Natural killer cell (primary cell): ENCODE measurements at regions of chr10 and their contacts with region 1.

Region 1: DNA sequence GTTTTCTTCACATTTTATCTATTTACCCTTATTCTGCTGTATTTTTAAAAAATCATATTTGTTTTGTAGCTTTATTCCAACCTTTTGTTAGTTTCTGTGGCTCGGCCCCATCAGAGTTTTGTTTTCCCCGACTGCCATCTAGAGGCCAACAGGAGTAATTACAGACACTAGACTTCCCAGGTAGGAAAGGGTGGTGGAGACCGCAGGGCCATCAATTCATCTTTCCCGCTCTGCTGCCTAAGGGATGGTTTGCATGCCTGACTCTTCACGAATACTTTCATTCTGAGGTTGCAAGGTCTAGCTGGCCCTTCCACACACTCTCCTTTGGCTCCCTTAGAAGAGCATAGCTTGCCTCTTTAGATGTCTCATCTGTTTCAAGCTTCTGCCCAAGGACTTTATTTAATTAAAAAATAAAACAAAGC is 38.3 kb downstream of the LYZL2 start:
- DNase-seq: peak; percentile 22 to 84
- ATAC-seq: peak; percentile 73 to 91 (median 87)
- H3K4me3 ChIP-seq: no peak overlapping the region
- H3K4me3 Mint-ChIP-seq: no peak overlapping the region
- H3K27ac ChIP-seq: no peak overlapping the region
- H3K27ac Mint-ChIP-seq: no peak overlapping the region
- H3K4me1 ChIP-seq: peaks cover 9% of the 10 kb centered on the region
- H3K4me1 Mint-ChIP-seq: peaks cover 4 to 6% of the 10 kb centered on the region in 2 donors
- H3K27me3 ChIP-seq: no peaks in the 10 kb centered on the region
- H3K27me3 Mint-ChIP-seq: peaks cover 12 to 20% of the 10 kb centered on the region in 2 donors
- CTCF ChIP-seq: peak; percentile 85

Region 2: DNA sequence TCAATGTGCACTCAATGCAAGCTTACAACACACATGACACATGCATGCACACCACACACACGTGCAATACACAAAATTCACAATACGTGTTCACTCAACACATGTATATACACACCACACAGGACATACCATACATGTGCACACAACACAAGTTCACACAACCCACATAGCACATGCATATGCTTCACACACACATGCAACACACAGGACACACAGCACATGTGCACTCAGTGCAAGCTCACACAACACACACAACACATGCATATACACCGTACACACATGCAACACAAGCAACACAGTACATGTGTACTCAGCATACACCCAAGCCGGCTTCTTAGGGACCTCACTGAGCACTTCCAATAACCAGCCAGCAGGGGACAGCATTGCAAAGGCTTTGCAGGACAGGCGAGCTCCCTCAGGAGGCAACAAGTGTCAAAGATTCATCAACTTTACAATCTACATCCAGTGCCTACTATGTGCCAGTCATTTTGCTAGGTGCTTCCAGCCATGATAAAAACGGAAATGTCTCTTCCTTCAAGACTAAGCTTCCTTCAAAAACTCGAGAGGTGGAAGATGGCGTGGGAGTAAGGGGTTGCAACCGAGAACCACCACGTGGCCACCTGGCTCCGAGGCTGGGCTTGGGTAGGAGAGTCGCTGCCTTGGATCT is 593.0 kb before region 1 on chr10:
- intact Hi-C with region 1: loop called (anchors 5 kb)
- DNase-seq: peak; percentile 70 to 90
- ATAC-seq: peak; percentile 86 to 98 (median 93)
- H3K4me3 ChIP-seq: no peak overlapping the region
- H3K4me3 Mint-ChIP-seq: no peak overlapping the region
- H3K27ac ChIP-seq: no peak overlapping the region
- H3K27ac Mint-ChIP-seq: no peak overlapping the region
- H3K4me1 ChIP-seq: no peaks in the 10 kb centered on the region
- H3K4me1 Mint-ChIP-seq: peaks cover 0 to 16% of the 10 kb centered on the region in 2 donors
- H3K27me3 ChIP-seq: peaks cover 2% of the 10 kb centered on the region
- H3K27me3 Mint-ChIP-seq: peaks cover 48 to 68% of the 10 kb centered on the region in 2 donors
- CTCF ChIP-seq: peak; percentile 96

Region 3: DNA sequence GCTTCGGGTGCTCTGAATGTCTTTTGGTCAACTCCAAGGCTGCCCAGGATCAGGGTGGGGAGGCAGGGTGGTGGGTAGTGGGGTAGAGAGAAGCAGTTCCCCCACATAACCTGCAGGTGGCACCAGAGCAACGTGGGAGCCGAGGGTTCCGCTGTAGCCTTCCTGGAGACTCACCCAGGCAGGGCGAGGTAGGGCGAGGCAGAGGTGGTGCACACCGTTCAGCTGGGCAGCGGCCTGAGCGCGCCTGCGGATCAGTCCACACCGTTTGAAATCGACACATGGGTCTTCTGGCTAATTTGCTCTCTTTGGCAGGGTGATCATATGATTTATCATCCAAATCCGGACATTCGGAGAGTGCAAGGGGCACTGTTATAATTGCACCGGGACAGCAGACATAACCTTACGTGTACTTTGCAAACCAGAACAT is 198.7 kb before region 1 on chr10:
- intact Hi-C with region 1: loop called (anchors 1 kb)
- DNase-seq: peak; percentile 69 to 86
- ATAC-seq: peak; percentile 95 to 100 (median 100)
- H3K4me3 ChIP-seq: no peak overlapping the region
- H3K4me3 Mint-ChIP-seq: no peak overlapping the region
- H3K27ac ChIP-seq: no peak overlapping the region
- H3K27ac Mint-ChIP-seq: no peak overlapping the region
- H3K4me1 ChIP-seq: peaks cover 6% of the 10 kb centered on the region
- H3K4me1 Mint-ChIP-seq: peaks cover 4 to 5% of the 10 kb centered on the region in 2 donors
- H3K27me3 ChIP-seq: no peaks in the 10 kb centered on the region
- H3K27me3 Mint-ChIP-seq: peaks cover 6 to 16% of the 10 kb centered on the region in 2 donors
- CTCF ChIP-seq: peak; percentile 97

Region 4: DNA sequence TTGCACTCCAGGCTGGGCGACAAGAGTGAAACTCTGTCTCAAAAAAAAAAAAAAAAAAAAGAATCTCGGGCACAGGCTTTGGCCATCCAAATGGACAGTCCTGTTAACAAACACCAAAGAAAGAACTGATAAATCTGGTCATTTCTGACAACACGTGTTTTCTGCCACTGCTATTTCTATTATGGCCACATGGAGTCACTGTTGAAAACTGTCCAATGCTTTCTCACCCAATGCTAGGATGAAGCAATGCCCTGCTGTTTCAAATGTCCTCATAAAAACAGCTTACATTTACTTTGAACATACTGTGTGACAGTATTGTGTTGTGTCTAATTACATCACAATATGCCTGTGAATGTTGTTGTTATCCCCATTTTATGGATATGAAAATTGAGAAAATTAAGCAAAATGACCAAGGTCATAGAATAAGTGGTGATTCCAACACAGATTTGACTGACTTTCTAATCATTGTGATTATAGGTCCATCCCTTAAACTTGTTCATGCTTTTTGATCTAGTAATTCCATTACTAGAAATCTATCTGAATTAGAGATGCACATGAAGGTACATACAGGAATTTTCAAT is 177.2 kb before region 1 on chr10:
- intact Hi-C with region 1: loop called (anchors 1 kb)
- DNase-seq: peak in 1 of 2 donors; percentile 78
- ATAC-seq: peak; percentile 86 to 95 (median 94)
- H3K4me3 ChIP-seq: no peak overlapping the region
- H3K4me3 Mint-ChIP-seq: no peak overlapping the region
- H3K27ac ChIP-seq: no peak overlapping the region
- H3K27ac Mint-ChIP-seq: no peak overlapping the region
- H3K4me1 ChIP-seq: peaks cover 8% of the 10 kb centered on the region
- H3K4me1 Mint-ChIP-seq: peaks cover 14 to 18% of the 10 kb centered on the region in 2 donors
- H3K27me3 ChIP-seq: no peaks in the 10 kb centered on the region
- H3K27me3 Mint-ChIP-seq: no peaks in the 10 kb centered on the region
- CTCF ChIP-seq: peak; percentile 80

Region 5: DNA sequence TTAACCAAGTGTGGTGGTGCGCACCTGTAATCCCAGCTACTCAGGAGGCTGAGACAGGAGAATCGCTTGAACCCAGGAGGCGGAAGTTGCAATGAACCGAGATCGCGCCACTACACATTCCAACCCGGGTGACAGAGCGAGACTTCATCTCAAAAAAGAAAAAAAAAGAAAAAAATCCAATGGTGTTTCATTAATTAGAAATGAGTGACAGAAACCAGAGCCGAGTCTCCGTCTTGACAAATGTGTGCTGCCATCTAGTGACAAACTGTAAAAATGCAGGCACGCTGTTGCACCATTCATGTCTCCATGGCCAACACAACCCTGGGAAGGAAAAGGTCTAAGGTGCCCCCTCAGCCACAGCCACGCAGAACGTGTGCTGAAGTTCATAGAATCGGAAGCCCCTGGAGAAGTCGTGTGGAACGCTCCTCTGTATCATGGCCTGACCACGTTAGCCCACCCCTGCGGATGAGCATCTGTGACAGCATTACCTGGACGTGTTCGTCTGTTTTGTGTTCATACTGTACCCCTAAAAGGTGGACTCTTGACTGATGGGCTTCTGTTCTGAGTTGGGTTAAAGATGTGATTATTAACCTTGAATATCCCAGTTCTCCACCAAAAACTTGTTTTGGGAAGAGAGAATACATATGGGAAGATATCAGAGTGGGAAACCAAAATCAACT is 56.7 kb before region 1 on chr10:
- intact Hi-C with region 1: loop called (anchors 2 kb)
- DNase-seq: peak; percentile 68 to 90
- ATAC-seq: peak; percentile 60 to 66 (median 65)
- H3K4me3 ChIP-seq: no peak overlapping the region
- H3K4me3 Mint-ChIP-seq: peak overlapping the region; percentile 4
- H3K27ac ChIP-seq: no peak overlapping the region
- H3K27ac Mint-ChIP-seq: peak overlapping the region in 1 of 2 donors; percentile 79
- H3K4me1 ChIP-seq: peaks cover 41% of the 10 kb centered on the region
- H3K4me1 Mint-ChIP-seq: peaks cover 41 to 42% of the 10 kb centered on the region in 2 donors
- H3K27me3 ChIP-seq: no peaks in the 10 kb centered on the region
- H3K27me3 Mint-ChIP-seq: no peaks in the 10 kb centered on the region
- CTCF ChIP-seq: peak; percentile 82

Region 6: GRCh38 chr10:30553625-30554439 is 37.4 kb before region 1 on chr10:
- intact Hi-C with region 1: no loop called
- DNase-seq: no peak
- ATAC-seq: no peak
- H3K4me3 ChIP-seq: no peak overlapping the region
- H3K4me3 Mint-ChIP-seq: no peak overlapping the region
- H3K27ac ChIP-seq: no peak overlapping the region
- H3K27ac Mint-ChIP-seq: peak overlapping the region in 1 of 2 donors; percentile 59
- H3K4me1 ChIP-seq: peaks cover 7% of the 10 kb centered on the region
- H3K4me1 Mint-ChIP-seq: peaks cover 0 to 23% of the 10 kb centered on the region in 2 donors
- H3K27me3 ChIP-seq: no peaks in the 10 kb centered on the region
- H3K27me3 Mint-ChIP-seq: no peaks in the 10 kb centered on the region
- CTCF ChIP-seq: no peak